ENCODE measurements at regions of chr19 and their contacts with region 1.

Region 1: GRCh38 chr19:506404-507285 is 652 bp upstream of the TPGS1 start:
- DNase-seq: peak; percentile 88 to 99 (median 98)
- ATAC-seq: peak; percentile 67
- H3K4me3 ChIP-seq: peak overlapping the region; percentile 100
- H3K4me3 Mint-ChIP-seq: peak overlapping the region; percentile 89 to 100 (median 97)
- H3K27ac ChIP-seq: peak overlapping the region; percentile 87
- H3K27ac Mint-ChIP-seq: peak overlapping the region; percentile 96 to 100 (median 99)
- H3K4me1 ChIP-seq: peaks cover 29 to 40% of the 10 kb centered on the region in 2 donors
- H3K4me1 Mint-ChIP-seq: peaks cover 21 to 49% (median 46%) of the 10 kb centered on the region in 7 donors
- H3K27me3 ChIP-seq: no peaks in the 10 kb centered on the region
- H3K27me3 Mint-ChIP-seq: no peaks in the 10 kb centered on the region

Region 2: GRCh38 chr19:344625-345319 is 161.9 kb before region 1 on chr19 and contains the start of gene MIER2:
- CTCF ChIA-PET with region 1: no interaction called
- POLR2A ChIA-PET with region 1: no interaction called
- intact Hi-C with region 1: loop called (anchors 1 to 2 kb)
- DNase-seq: peak; percentile 80 to 100 (median 89)
- ATAC-seq: peak; percentile 99
- H3K4me3 ChIP-seq: peak within 1 kb of the TSS; percentile 84
- H3K4me3 Mint-ChIP-seq: peak within 1 kb of the TSS; percentile 81 to 92 (median 86)
- H3K27ac ChIP-seq: peak within 1 kb of the TSS; percentile 59
- H3K27ac Mint-ChIP-seq: peak within 1 kb of the TSS; percentile 23 to 96 (median 81)
- H3K4me1 ChIP-seq: peaks cover 9 to 28% of the 10 kb centered on the region in 2 donors
- H3K4me1 Mint-ChIP-seq: peaks cover 39 to 51% (median 47%) of the 10 kb centered on the region in 7 donors
- H3K27me3 ChIP-seq: no peaks in the 10 kb centered on the region
- H3K27me3 Mint-ChIP-seq: peaks cover 0 to 5% (median 4%) of the 10 kb centered on the region in 5 donors
- total RNA-seq, gene MIER2: 16.0 to 24.6 (median 17.7) TPM

Region 3: GRCh38 chr19:488505-489417 is 17.9 kb before region 1 on chr19:
- CTCF ChIA-PET with region 1: interaction called, 14 read pairs
- POLR2A ChIA-PET with region 1: interaction called, 54 read pairs
- intact Hi-C with region 1: loop called (anchors 1 kb)
- DNase-seq: peak; percentile 88 to 95 (median 92)
- ATAC-seq: peak; percentile 97
- H3K4me3 ChIP-seq: peak overlapping the region; percentile 62
- H3K4me3 Mint-ChIP-seq: peak overlapping the region; percentile 65 to 87 (median 81)
- H3K27ac ChIP-seq: peak overlapping the region; percentile 96
- H3K27ac Mint-ChIP-seq: peak overlapping the region in 8 of 9 donors; percentile 69 to 88 (median 75)
- H3K4me1 ChIP-seq: peaks cover 0 to 5% of the 10 kb centered on the region in 2 donors
- H3K4me1 Mint-ChIP-seq: peaks cover 3 to 14% (median 9%) of the 10 kb centered on the region in 7 donors
- H3K27me3 ChIP-seq: no peaks in the 10 kb centered on the region
- H3K27me3 Mint-ChIP-seq: peaks cover 0 to 19% (median 11%) of the 10 kb centered on the region in 5 donors

Region 4: GRCh38 chr19:531009-531752 is 24.5 kb after region 1 on chr19:
- CTCF ChIA-PET with region 1: interaction called, 28 read pairs
- POLR2A ChIA-PET with region 1: interaction called, 70 read pairs
- intact Hi-C with region 1: loop called (anchors 1 kb)
- DNase-seq: peak; percentile 79 to 100 (median 94)
- ATAC-seq: peak; percentile 87
- H3K4me3 ChIP-seq: peak overlapping the region; percentile 72
- H3K4me3 Mint-ChIP-seq: peak overlapping the region; percentile 64 to 93 (median 82)
- H3K27ac ChIP-seq: peak overlapping the region; percentile 90
- H3K27ac Mint-ChIP-seq: peak overlapping the region in 8 of 9 donors; percentile 19 to 87 (median 80)
- H3K4me1 ChIP-seq: peaks cover 8 to 9% of the 10 kb centered on the region in 2 donors
- H3K4me1 Mint-ChIP-seq: peaks cover 8 to 32% (median 16%) of the 10 kb centered on the region in 7 donors
- H3K27me3 ChIP-seq: no peaks in the 10 kb centered on the region
- H3K27me3 Mint-ChIP-seq: peaks cover 0 to 4% (median 0%) of the 10 kb centered on the region in 5 donors

Region 5: GRCh38 chr19:633068-633785 is 126.6 kb after region 1 on chr19 and contains the start of gene POLRMT:
- CTCF ChIA-PET with region 1: no interaction called
- POLR2A ChIA-PET with region 1: no interaction called
- intact Hi-C with region 1: loop called in 1 of 2 experiments (anchors 2 kb)
- DNase-seq: peak; percentile 87 to 99 (median 96)
- ATAC-seq: peak; percentile 99
- H3K4me3 ChIP-seq: peak within 1 kb of the TSS; percentile 91
- H3K4me3 Mint-ChIP-seq: peak within 1 kb of the TSS; percentile 92 to 99 (median 97)
- H3K27ac ChIP-seq: peak within 1 kb of the TSS; percentile 78
- H3K27ac Mint-ChIP-seq: peak within 1 kb of the TSS; percentile 89 to 97 (median 93)
- H3K4me1 ChIP-seq: peaks cover 6 to 13% of the 10 kb centered on the region in 2 donors
- H3K4me1 Mint-ChIP-seq: peaks cover 13 to 41% (median 24%) of the 10 kb centered on the region in 7 donors
- H3K27me3 ChIP-seq: no peaks in the 10 kb centered on the region
- H3K27me3 Mint-ChIP-seq: no peaks in the 10 kb centered on the region
- total RNA-seq, gene POLRMT: 61.2 to 105 (median 71.3) TPM